PC-9 (cell line): ENCODE measurements at regions of chr2 and their contacts with region 1.

Region 1: DNA sequence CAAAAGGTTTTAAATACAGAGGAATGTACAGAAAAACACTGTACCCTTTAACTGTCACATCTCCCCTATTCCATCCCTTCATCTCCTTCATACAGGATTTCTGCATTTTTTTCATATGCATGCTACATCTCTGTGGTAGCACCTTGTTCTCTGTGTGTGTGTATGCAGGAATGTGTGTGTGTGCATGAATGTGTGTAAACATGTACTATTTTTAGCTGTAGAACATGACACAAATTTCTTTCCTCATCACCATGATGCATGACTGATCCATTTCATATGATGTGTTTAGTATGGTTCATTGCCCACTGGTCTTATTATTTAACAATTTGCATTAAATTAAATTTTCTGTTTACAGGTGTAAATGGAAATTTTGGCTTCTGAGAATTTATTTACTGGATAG is 21.5 kb upstream of the ZEB2 start:
- DNase-seq: no peak
- H3K4me3 ChIP-seq: no peak overlapping the region
- H3K27ac ChIP-seq: no peak overlapping the region
- H3K4me1 ChIP-seq: no peaks in the 10 kb centered on the region
- H3K27me3 ChIP-seq: no peaks in the 10 kb centered on the region
- CTCF ChIP-seq: no peak

Region 2: DNA sequence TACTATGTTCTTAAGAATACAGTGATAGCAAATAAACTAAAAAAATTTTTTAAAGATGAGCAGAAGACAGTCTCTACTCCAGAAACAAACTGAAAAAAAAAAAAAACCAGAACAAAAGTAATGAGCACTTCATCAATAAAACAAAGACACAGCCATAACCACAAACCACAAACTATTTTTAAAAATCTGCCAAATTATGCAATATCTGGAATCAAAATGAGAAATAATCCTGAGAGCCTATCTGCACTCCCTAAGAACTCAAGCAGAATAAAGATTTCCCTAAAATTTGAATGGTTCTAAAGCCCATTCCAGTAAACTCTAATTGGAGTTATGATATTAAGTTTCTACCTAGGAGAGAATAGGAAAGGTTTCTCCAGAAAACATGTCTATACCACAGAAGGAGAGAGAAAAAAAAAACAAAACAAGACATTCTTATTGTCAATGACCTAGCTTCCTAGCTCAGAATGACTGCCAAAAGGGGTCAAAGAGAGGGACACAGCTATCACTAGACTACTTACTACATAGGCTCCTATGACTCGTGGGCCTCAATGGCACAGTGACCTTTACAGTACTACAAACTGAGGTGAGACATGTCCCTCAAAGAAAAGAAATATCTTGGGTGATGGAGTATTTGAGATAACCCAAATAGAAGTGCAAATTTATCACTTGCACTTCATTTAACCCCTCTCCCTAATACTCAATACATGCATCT is 284.2 kb before region 1 on chr2:
- CTCF ChIA-PET with region 1: no interaction called
- POLR2A ChIA-PET with region 1: no interaction called
- intact Hi-C with region 1: no loop called
- DNase-seq: no peak
- H3K4me3 ChIP-seq: no peak overlapping the region
- H3K27ac ChIP-seq: no peak overlapping the region
- H3K4me1 ChIP-seq: no peaks in the 10 kb centered on the region
- H3K27me3 ChIP-seq: no peaks in the 10 kb centered on the region
- CTCF ChIP-seq: no peak

Region 3: GRCh38 chr2:144567745-144568144 is 26.3 kb after region 1 on chr2:
- CTCF ChIA-PET with region 1: no interaction called
- POLR2A ChIA-PET with region 1: no interaction called
- intact Hi-C with region 1: loop called (anchors 2 kb)
- DNase-seq: no peak
- H3K4me3 ChIP-seq: no peak overlapping the region
- H3K27ac ChIP-seq: no peak overlapping the region
- H3K4me1 ChIP-seq: no peaks in the 10 kb centered on the region
- H3K27me3 ChIP-seq: no peaks in the 10 kb centered on the region
- CTCF ChIP-seq: no peak